ENCODE measurements at regions of chr6 and their contacts with region 1.

Region 1: DNA sequence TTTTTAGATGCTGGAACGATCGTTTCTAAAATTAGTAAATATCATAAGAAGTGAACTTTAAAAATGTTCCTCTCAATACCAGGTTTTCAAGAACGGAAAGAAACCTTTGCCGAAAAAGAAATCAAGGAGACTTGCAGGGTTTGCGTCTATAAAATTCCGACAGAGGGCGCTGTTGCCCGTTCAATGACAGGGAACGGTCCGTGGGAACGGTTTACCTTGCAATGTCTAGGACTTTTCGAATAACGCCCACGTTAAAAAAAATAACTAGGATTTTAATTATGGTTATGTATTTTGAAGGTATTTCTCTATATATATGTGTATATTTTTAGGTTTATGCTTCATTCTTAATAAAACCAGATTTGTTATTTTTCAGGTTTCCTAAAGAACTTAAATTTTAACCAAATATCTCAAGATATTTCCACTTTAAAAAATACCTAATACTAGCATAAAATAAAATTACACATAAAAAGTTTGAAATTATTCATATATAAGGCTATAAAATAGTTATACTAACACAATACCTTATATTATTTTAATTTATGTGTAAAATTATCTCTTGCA is 2.5 kb upstream of the TFAP2B start:
- DNase-seq: peak; percentile 60 to 71
- H3K4me3 ChIP-seq: peak overlapping the region; percentile 19
- H3K4me3 Mint-ChIP-seq: peak overlapping the region; percentile 74
- H3K27ac Mint-ChIP-seq: no peak overlapping the region
- H3K4me1 ChIP-seq: peaks cover 5% of the 10 kb centered on the region; the same call in 1 of the 2 replicates
- H3K4me1 Mint-ChIP-seq: peaks cover 9% of the 10 kb centered on the region
- H3K27me3 ChIP-seq: no peaks in the 10 kb centered on the region
- H3K27me3 Mint-ChIP-seq: peaks cover 12% of the 10 kb centered on the region
- CTCF ChIP-seq: peak; percentile 70 to 73

Region 2: GRCh38 chr6:50707652-50708300 is 108.4 kb before region 1 on chr6:
- CTCF ChIA-PET with region 1: no interaction called
- POLR2A ChIA-PET with region 1: no interaction called
- intact Hi-C with region 1: no loop called
- DNase-seq: no peak
- H3K4me3 ChIP-seq: no peak overlapping the region
- H3K4me3 Mint-ChIP-seq: no peak overlapping the region
- H3K27ac Mint-ChIP-seq: no peak overlapping the region
- H3K4me1 ChIP-seq: no peaks in the 10 kb centered on the region
- H3K4me1 Mint-ChIP-seq: no peaks in the 10 kb centered on the region
- H3K27me3 ChIP-seq: no peaks in the 10 kb centered on the region
- H3K27me3 Mint-ChIP-seq: peaks cover 24% of the 10 kb centered on the region
- CTCF ChIP-seq: no peak

Region 3: GRCh38 chr6:50887112-50887511 is 70.9 kb after region 1 on chr6:
- CTCF ChIA-PET with region 1: no interaction called
- POLR2A ChIA-PET with region 1: no interaction called
- intact Hi-C with region 1: no loop called
- DNase-seq: no peak
- H3K4me3 ChIP-seq: no peak overlapping the region
- H3K4me3 Mint-ChIP-seq: no peak overlapping the region
- H3K27ac Mint-ChIP-seq: no peak overlapping the region
- H3K4me1 ChIP-seq: no peaks in the 10 kb centered on the region
- H3K4me1 Mint-ChIP-seq: no peaks in the 10 kb centered on the region
- H3K27me3 ChIP-seq: no peaks in the 10 kb centered on the region
- H3K27me3 Mint-ChIP-seq: no peaks in the 10 kb centered on the region
- CTCF ChIP-seq: no peak

Region 4: GRCh38 chr6:51077821-51078518 is 261.8 kb after region 1 on chr6:
- CTCF ChIA-PET with region 1: no interaction called
- POLR2A ChIA-PET with region 1: no interaction called
- intact Hi-C with region 1: no loop called
- DNase-seq: no peak
- H3K4me3 ChIP-seq: no peak overlapping the region
- H3K4me3 Mint-ChIP-seq: no peak overlapping the region
- H3K27ac Mint-ChIP-seq: no peak overlapping the region
- H3K4me1 ChIP-seq: no peaks in the 10 kb centered on the region
- H3K4me1 Mint-ChIP-seq: no peaks in the 10 kb centered on the region
- H3K27me3 ChIP-seq: no peaks in the 10 kb centered on the region
- H3K27me3 Mint-ChIP-seq: no peaks in the 10 kb centered on the region
- CTCF ChIP-seq: no peak

Region 5: GRCh38 chr6:51118792-51119482 is 302.7 kb after region 1 on chr6:
- CTCF ChIA-PET with region 1: no interaction called
- POLR2A ChIA-PET with region 1: no interaction called
- intact Hi-C with region 1: no loop called
- DNase-seq: no peak
- H3K4me3 ChIP-seq: no peak overlapping the region
- H3K4me3 Mint-ChIP-seq: no peak overlapping the region
- H3K27ac Mint-ChIP-seq: no peak overlapping the region
- H3K4me1 ChIP-seq: no peaks in the 10 kb centered on the region
- H3K4me1 Mint-ChIP-seq: no peaks in the 10 kb centered on the region
- H3K27me3 ChIP-seq: no peaks in the 10 kb centered on the region
- H3K27me3 Mint-ChIP-seq: peaks cover 4% of the 10 kb centered on the region
- CTCF ChIP-seq: no peak

Region 6: DNA sequence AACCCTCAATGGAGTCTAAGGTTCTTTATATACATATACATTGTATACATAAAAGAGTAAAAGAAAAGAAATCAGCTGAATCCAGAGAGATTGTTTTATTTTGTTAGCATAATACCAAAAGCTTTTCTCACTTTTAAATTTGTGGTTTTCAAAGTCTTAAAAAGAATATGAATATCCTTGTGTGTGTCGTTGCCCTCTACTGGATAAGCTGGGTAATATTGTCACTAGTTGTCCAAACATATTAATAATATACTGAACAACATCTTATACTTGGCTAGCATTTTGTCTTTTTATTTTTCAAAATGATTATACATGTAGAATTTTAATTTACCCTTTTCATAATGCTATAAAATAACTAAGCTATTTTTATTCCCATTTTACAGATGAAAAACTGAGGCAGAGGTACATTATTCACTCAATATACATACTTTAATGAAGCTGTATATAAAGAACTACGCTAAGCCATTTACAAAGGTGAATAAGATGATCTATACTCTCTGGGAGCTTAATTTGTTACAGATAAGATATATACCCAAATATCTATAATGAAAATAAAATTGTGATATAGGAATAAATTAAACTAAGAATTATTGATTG is 534.2 kb after region 1 on chr6:
- CTCF ChIA-PET with region 1: no interaction called
- POLR2A ChIA-PET with region 1: no interaction called
- intact Hi-C with region 1: loop called (anchors 1 kb)
- DNase-seq: no peak
- H3K4me3 ChIP-seq: no peak overlapping the region
- H3K4me3 Mint-ChIP-seq: no peak overlapping the region
- H3K27ac Mint-ChIP-seq: no peak overlapping the region
- H3K4me1 ChIP-seq: no peaks in the 10 kb centered on the region
- H3K4me1 Mint-ChIP-seq: no peaks in the 10 kb centered on the region
- H3K27me3 ChIP-seq: no peaks in the 10 kb centered on the region
- H3K27me3 Mint-ChIP-seq: peaks cover 7% of the 10 kb centered on the region
- CTCF ChIP-seq: peak in 1 of 2 experiments; percentile 20

Region 7: GRCh38 chr6:51541847-51542246 is 725.7 kb after region 1 on chr6:
- CTCF ChIA-PET with region 1: no interaction called
- POLR2A ChIA-PET with region 1: no interaction called
- intact Hi-C with region 1: loop called (anchors 1 kb)
- DNase-seq: no peak
- H3K4me3 ChIP-seq: no peak overlapping the region
- H3K4me3 Mint-ChIP-seq: no peak overlapping the region
- H3K27ac Mint-ChIP-seq: no peak overlapping the region
- H3K4me1 ChIP-seq: no peaks in the 10 kb centered on the region
- H3K4me1 Mint-ChIP-seq: peaks cover 9% of the 10 kb centered on the region
- H3K27me3 ChIP-seq: no peaks in the 10 kb centered on the region
- H3K27me3 Mint-ChIP-seq: peaks cover 9% of the 10 kb centered on the region
- CTCF ChIP-seq: no peak

Region 8: GRCh38 chr6:51959744-51960383 is 1143.7 kb after region 1 on chr6:
- CTCF ChIA-PET with region 1: no interaction called
- POLR2A ChIA-PET with region 1: no interaction called
- intact Hi-C with region 1: loop called (anchors 1 kb)
- DNase-seq: peak; percentile 68 to 81
- H3K4me3 ChIP-seq: no peak overlapping the region
- H3K4me3 Mint-ChIP-seq: no peak overlapping the region
- H3K27ac Mint-ChIP-seq: no peak overlapping the region
- H3K4me1 ChIP-seq: no peaks in the 10 kb centered on the region
- H3K4me1 Mint-ChIP-seq: no peaks in the 10 kb centered on the region
- H3K27me3 ChIP-seq: no peaks in the 10 kb centered on the region
- H3K27me3 Mint-ChIP-seq: no peaks in the 10 kb centered on the region
- CTCF ChIP-seq: peak; percentile 77 to 86

Region 9: GRCh38 chr6:52049252-52050050 is 1233.3 kb after region 1 on chr6:
- CTCF ChIA-PET with region 1: no interaction called
- POLR2A ChIA-PET with region 1: no interaction called
- intact Hi-C with region 1: loop called (anchors 1 kb)
- DNase-seq: peak in 1 of 2 experiments; percentile 38
- H3K4me3 ChIP-seq: no peak overlapping the region
- H3K4me3 Mint-ChIP-seq: no peak overlapping the region
- H3K27ac Mint-ChIP-seq: no peak overlapping the region
- H3K4me1 ChIP-seq: no peaks in the 10 kb centered on the region
- H3K4me1 Mint-ChIP-seq: no peaks in the 10 kb centered on the region
- H3K27me3 ChIP-seq: no peaks in the 10 kb centered on the region
- H3K27me3 Mint-ChIP-seq: no peaks in the 10 kb centered on the region
- CTCF ChIP-seq: peak; percentile 50 to 59